ENCODE measurements at regions of chr9 and their contacts with region 1.

Region 1: GRCh38 chr9:17031546-17031945 is 103.3 kb upstream of the CNTLN start:
- DNase-seq: no peak
- ATAC-seq: no peak
- H3K4me3 ChIP-seq: no peak overlapping the region
- H3K27ac ChIP-seq: no peak overlapping the region
- H3K4me1 ChIP-seq: no peaks in the 10 kb centered on the region
- H3K27me3 ChIP-seq: no peaks in the 10 kb centered on the region

Region 2: DNA sequence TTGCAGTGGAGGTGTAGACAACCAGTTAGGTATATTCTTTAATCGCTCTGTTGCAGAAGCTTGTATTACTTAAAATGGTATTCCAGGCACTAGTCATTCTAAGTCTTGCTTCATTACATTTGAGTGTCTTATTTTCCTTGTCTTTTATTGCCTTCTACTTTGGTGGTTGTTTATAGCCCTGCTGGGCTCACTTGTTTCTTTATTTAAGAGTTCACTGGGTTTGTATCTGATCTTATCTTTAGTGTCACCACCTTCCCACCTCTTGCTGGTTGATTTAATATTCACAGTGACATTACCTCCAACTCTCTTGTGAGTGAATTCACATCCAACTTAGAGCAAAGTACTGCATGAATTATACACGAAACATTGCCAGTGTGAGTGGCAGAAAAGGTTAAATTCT is 77.5 kb before region 1 on chr9:
- intact Hi-C with region 1: loop called in 1 of 2 experiments (anchors 10 kb)
- DNase-seq: no peak
- ATAC-seq: no peak
- H3K4me3 ChIP-seq: no peak overlapping the region
- H3K27ac ChIP-seq: no peak overlapping the region
- H3K4me1 ChIP-seq: no peaks in the 10 kb centered on the region
- H3K27me3 ChIP-seq: no peaks in the 10 kb centered on the region

Region 3: GRCh38 chr9:16985559-16986348 is 45.8 kb before region 1 on chr9:
- intact Hi-C with region 1: no loop called
- DNase-seq: peak; percentile 86 to 89
- ATAC-seq: peak; percentile 92
- H3K4me3 ChIP-seq: no peak overlapping the region
- H3K27ac ChIP-seq: peak overlapping the region; percentile 39 to 95
- H3K4me1 ChIP-seq: peaks cover 0 to 3% of the 10 kb centered on the region in 2 donors
- H3K27me3 ChIP-seq: no peaks in the 10 kb centered on the region

Measured in aorta (tissue), 5 donors.